Cardiac septum (tissue), 1 donor: ENCODE measurements at regions of chr19 and their contacts with region 1.

Region 1: DNA sequence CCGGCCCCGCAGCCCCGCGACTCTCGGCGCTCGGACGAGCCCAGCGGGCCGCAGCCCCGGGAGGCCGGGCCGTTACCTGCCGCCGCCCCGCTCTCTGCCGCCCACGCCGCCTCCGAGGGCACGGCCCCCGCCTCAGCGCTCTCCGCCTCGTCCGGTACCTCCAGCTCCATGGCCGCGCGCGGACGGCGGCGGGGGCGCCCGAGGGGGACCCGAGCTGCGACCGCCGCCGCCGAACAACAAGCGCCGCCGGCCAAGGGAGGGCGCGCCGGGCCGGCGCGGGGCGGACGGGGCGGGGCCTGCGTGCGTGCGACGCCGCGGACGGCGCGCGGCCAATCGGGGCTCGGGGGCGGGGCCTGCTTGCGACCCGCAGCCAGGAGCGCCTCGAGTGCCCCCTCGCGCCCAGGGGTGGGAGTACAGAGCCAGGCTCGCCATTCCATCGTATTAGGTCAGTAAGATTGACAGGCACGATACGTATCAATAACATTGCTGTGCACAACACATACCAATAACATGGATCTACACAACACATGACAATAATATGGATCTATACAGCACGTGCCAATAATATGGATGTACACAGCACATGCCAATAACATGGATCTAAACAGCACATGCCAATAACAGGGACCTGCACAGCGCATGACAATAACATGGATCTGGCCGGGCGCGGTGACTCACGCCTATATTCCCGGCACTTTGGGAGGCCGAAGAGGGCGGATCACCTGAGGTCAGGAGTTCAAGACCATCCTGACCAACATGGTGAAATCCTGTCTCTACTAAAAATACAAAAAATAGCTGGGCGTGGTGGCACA is at the start of gene PIP5K1C:
- DNase-seq: peak; percentile 95
- total RNA-seq, gene PIP5K1C: 38.2 TPM

Region 2: GRCh38 chr19:3660493-3661219 is 39.8 kb before region 1 on chr19:
- intact Hi-C with region 1: no loop called
- DNase-seq: no peak

Region 3: GRCh38 chr19:3671680-3672574 is 28.5 kb before region 1 on chr19:
- intact Hi-C with region 1: loop called (anchors 1 kb)
- DNase-seq: no peak